ENCODE measurements at regions of chr6 and their contacts with region 1.

Region 1: GRCh38 chr6:127516666-127517273 is 2.4 kb downstream of the MTCL3 start:
- H3K4me3 ChIP-seq: peak overlapping the region; percentile 78
- H3K27ac ChIP-seq: no peak overlapping the region; the same call in 1 of the 2 replicates
- H3K4me1 ChIP-seq: peaks cover 3% of the 10 kb centered on the region; the same call in 1 of the 2 replicates
- CTCF ChIP-seq: no peak; the same call in 1 of the 2 replicates

Region 2: GRCh38 chr6:127484212-127484858 is 32.4 kb before region 1 on chr6:
- CTCF ChIA-PET with region 1: interaction called, 54 read pairs
- POLR2A ChIA-PET with region 1: interaction called, 9 read pairs
- H3K4me3 ChIP-seq: no peak overlapping the region
- H3K27ac ChIP-seq: no peak overlapping the region
- H3K4me1 ChIP-seq: peaks cover 7% of the 10 kb centered on the region; the same call in 1 of the 2 replicates
- CTCF ChIP-seq: no peak

Region 3: DNA sequence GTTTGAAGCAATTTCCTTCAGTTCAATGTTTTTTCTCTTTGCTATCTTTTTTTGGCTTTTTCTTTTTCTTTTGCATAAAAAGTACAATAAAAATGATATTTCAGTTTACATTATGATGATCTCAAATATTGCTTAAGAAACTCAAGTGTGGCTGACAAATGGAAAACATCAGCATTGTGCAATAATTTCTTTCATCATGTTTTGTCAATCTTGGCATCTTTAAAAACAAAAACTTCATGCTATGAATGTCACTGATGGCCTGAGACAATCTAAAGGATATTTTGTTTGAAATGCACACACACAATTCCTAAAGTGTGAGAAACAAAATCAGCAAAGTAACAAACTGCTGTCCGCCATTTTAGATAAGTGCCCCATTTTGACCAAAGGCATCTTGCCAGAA is 16.2 kb after region 1 on chr6:
- CTCF ChIA-PET with region 1: interaction called, 45 read pairs
- POLR2A ChIA-PET with region 1: no interaction called
- H3K4me3 ChIP-seq: no peak overlapping the region
- H3K27ac ChIP-seq: no peak overlapping the region
- H3K4me1 ChIP-seq: no peaks in the 10 kb centered on the region
- CTCF ChIP-seq: no peak

Region 4: DNA sequence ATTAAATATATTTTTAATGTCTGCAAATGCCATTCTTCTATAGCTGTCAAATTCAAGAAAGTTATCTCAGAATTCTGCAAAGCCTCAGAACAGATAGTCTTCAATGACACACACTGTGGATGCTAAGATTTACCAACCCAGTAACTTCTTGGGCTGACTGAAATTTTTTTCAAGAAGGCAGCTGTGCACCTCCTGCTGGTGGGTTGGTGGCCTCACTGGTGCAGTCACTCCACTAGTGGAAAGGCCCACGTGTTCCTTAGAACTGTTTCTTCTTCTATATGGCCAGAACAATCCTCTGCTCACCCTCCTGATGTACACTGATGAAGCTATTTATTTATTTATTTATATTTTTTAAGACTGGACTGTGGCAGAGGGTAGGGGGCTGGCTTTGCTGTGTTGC is 30.4 kb after region 1 on chr6:
- CTCF ChIA-PET with region 1: interaction called, 11 read pairs
- POLR2A ChIA-PET with region 1: no interaction called
- H3K4me3 ChIP-seq: no peak overlapping the region
- H3K27ac ChIP-seq: no peak overlapping the region
- H3K4me1 ChIP-seq: no peaks in the 10 kb centered on the region
- CTCF ChIP-seq: no peak

Region 5: GRCh38 chr6:127570739-127571389 is 54.1 kb after region 1 on chr6:
- CTCF ChIA-PET with region 1: no interaction called
- POLR2A ChIA-PET with region 1: no interaction called
- H3K4me3 ChIP-seq: no peak overlapping the region
- H3K27ac ChIP-seq: no peak overlapping the region
- H3K4me1 ChIP-seq: peaks cover 2% of the 10 kb centered on the region; the same call in 1 of the 2 replicates
- CTCF ChIP-seq: no peak

Measured in HEK293 (cell line).